GM12878 (cell line): ENCODE measurements at regions of chr9 and their contacts with region 1.

Region 1: GRCh38 chr9:130712564-130713285 is 19.1 kb downstream of the EXOSC2 start:
- DNase-seq: peak; percentile 91
- ATAC-seq: peak; percentile 99
- H3K4me3 ChIP-seq: peak overlapping the region; percentile 98
- H3K27ac ChIP-seq: peak overlapping the region; percentile 96
- H3K4me1 ChIP-seq: no peaks in the 10 kb centered on the region
- H3K27me3 ChIP-seq: no peaks in the 10 kb centered on the region
- CTCF ChIP-seq: no peak
- EP300 ChIP-seq: no peak
- POLR2A ChIP-seq: peak; percentile 90
- RAD21 ChIP-seq: no peak

Region 2: GRCh38 chr9:130658893-130659698 is 53.6 kb before region 1 on chr9:
- CTCF ChIA-PET with region 1: no interaction called
- POLR2A ChIA-PET with region 1: no interaction called
- RAD21 ChIA-PET with region 1: no interaction called
- SMC1A ChIA-PET with region 1: no interaction called
- in situ Hi-C with region 1: no loop called
- intact Hi-C with region 1: no loop called
- DNase-seq: no peak
- ATAC-seq: no peak
- H3K4me3 ChIP-seq: no peak overlapping the region
- H3K27ac ChIP-seq: no peak overlapping the region
- H3K4me1 ChIP-seq: no peaks in the 10 kb centered on the region
- H3K27me3 ChIP-seq: peaks cover 14 to 21% of the 10 kb centered on the region in 2 experiments
- CTCF ChIP-seq: no peak
- EP300 ChIP-seq: no peak
- POLR2A ChIP-seq: no peak
- RAD21 ChIP-seq: no peak

Region 3: GRCh38 chr9:130732131-130732530 is 19.4 kb after region 1 on chr9:
- CTCF ChIA-PET with region 1: interaction called, 12 read pairs
- POLR2A ChIA-PET with region 1: no interaction called
- RAD21 ChIA-PET with region 1: interaction called, 3 read pairs
- SMC1A ChIA-PET with region 1: interaction called, 10 read pairs
- in situ Hi-C with region 1: no loop called
- intact Hi-C with region 1: no loop called
- DNase-seq: no peak
- ATAC-seq: 0 out of 3 replicates have a peak, but pooled peaks have one; percentile 21
- H3K4me3 ChIP-seq: no peak overlapping the region
- H3K27ac ChIP-seq: no peak overlapping the region
- H3K4me1 ChIP-seq: no peaks in the 10 kb centered on the region
- H3K27me3 ChIP-seq: no peaks in the 10 kb centered on the region
- CTCF ChIP-seq: no peak
- EP300 ChIP-seq: no peak
- POLR2A ChIP-seq: no peak
- RAD21 ChIP-seq: no peak

Region 4: DNA sequence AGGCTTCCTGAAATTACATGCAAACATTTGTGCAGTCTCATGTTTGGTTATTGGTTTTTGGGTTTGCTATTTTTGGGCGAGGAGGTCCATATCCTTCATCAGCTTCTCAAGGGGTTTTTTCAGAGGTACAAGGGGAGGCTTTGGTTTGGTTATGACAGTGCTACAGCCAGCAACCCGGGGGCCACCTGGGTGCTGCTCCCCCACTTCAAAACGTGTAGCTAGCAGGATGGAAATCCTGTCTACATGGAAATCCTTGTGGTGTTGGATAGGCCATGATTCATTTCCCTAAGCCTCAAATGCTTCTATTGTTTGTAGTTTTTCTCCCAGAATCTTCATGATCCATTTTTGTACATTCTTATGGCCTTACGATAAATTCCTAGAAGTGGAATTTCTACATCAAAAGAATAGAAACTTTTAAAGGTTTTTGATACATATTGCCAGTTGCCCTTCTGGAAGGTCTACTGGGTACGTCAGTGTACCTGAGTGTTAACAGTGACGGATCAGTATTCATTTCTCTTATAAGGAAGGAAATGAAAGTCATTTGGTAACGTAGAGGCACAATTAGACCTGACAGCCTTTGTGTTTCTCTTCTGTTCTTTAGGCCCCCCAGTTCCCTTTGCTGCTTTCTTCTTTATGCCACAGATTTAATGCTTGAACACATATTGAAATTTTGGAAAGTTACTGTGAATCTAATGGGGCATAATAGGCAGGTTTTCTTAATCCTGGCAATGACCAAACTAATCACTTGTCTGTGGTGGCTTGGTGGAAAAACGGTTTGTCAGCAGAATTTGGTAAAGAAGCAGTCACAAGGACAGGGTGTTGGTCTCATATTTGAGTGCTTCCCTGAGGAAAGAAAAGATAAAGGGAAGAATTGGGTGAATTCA is 52.7 kb after region 1 on chr9:
- CTCF ChIA-PET with region 1: interaction called, 22 read pairs
- POLR2A ChIA-PET with region 1: interaction called, 4 read pairs
- RAD21 ChIA-PET with region 1: interaction called, 10 read pairs
- SMC1A ChIA-PET with region 1: interaction called, 5 read pairs
- in situ Hi-C with region 1: no loop called
- intact Hi-C with region 1: loop called (anchors 2 kb)
- DNase-seq: peak; percentile 64
- ATAC-seq: peak; percentile 78
- H3K4me3 ChIP-seq: peak overlapping the region; percentile 28; the same call in 1 of the 2 replicates
- H3K27ac ChIP-seq: peak overlapping the region; percentile 84
- H3K4me1 ChIP-seq: peaks cover 65% of the 10 kb centered on the region
- H3K27me3 ChIP-seq: no peaks in the 10 kb centered on the region
- CTCF ChIP-seq: no peak
- EP300 ChIP-seq: peak; percentile 5 to 45; a peak in 1 of 4 replicates
- POLR2A ChIP-seq: no peak
- RAD21 ChIP-seq: no peak

Region 5: GRCh38 chr9:130834371-130835311 is 121.9 kb after region 1 on chr9 and contains the start of gene ABL1:
- CTCF ChIA-PET with region 1: no interaction called
- POLR2A ChIA-PET with region 1: interaction called, 4 read pairs
- RAD21 ChIA-PET with region 1: interaction called, 5 read pairs
- SMC1A ChIA-PET with region 1: interaction called, 4 read pairs
- in situ Hi-C with region 1: no loop called
- intact Hi-C with region 1: loop called (anchors 10 kb)
- DNase-seq: peak; percentile 51
- ATAC-seq: peak; percentile 91
- H3K4me3 ChIP-seq: peak within 1 kb of the TSS; percentile 77
- H3K27ac ChIP-seq: peak within 1 kb of the TSS; percentile 84
- H3K4me1 ChIP-seq: peaks cover 3% of the 10 kb centered on the region; the same call in 1 of the 2 replicates
- H3K27me3 ChIP-seq: no peaks in the 10 kb centered on the region
- CTCF ChIP-seq: no peak
- EP300 ChIP-seq: peak in 1 of 2 experiments; percentile 31; a peak in 1 of 4 replicates
- POLR2A ChIP-seq: peak; percentile 82
- RAD21 ChIP-seq: no peak
- polyA plus RNA-seq, gene ABL1: 0.79 to 1.6 TPM

Region 6: DNA sequence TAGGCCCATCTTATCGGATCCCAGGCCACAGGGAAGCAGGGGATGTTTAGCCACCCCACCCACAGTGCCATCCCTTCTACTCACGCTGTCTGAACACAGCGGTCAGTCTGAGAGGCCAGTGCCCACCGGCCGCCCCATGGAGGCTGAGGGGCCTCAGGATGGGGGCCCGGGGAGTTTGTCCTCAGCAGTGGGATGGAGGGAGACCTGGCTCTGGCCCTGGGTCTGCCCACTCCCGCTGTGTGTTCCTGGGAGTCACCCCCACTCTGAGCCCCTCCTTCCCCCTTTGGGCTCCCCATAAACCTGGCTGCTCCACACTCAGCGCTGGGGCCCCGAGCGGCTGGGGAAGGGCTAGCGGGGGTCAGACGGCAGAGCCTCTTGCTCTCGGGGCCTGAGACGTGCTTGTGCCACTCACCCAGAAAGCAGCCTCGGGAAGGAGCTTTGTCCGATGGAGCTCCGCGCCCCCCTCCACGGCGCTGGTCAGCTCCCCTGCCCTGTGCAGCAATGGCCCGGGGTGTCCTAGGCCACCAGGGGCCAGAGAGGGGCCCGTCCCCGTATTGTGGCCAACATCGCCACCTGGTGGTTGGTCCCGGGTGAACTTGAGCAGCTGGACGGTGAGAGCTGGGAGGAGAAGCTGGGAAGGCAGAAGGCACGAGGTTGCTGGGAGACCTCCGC is 285.3 kb after region 1 on chr9:
- CTCF ChIA-PET with region 1: interaction called, 3 read pairs
- POLR2A ChIA-PET with region 1: no interaction called
- RAD21 ChIA-PET with region 1: no interaction called
- SMC1A ChIA-PET with region 1: no interaction called
- in situ Hi-C with region 1: no loop called
- intact Hi-C with region 1: loop called (anchors 5 kb)
- DNase-seq: no peak
- ATAC-seq: peak; percentile 91
- H3K4me3 ChIP-seq: no peak overlapping the region
- H3K27ac ChIP-seq: no peak overlapping the region
- H3K4me1 ChIP-seq: no peaks in the 10 kb centered on the region
- H3K27me3 ChIP-seq: peaks cover 0 to 2% of the 10 kb centered on the region in 2 experiments; a peak in 2 of 4 replicates
- CTCF ChIP-seq: peak; percentile 57 to 69 (median 60)
- EP300 ChIP-seq: no peak
- POLR2A ChIP-seq: no peak
- RAD21 ChIP-seq: peak; percentile 62